SK-N-SH (cell line): ENCODE measurements at regions of chr2 and their contacts with region 1.

Region 1: GRCh38 chr2:165239230-165239629 is at the start of gene SCN2A:
- DNase-seq: peak; percentile 33
- H3K4me3 ChIP-seq: peak within 1 kb of the TSS in 1 of 2 experiments; percentile 33; a peak in 3 of 4 replicates
- H3K27ac ChIP-seq: peak within 1 kb of the TSS in 1 of 2 experiments; percentile 68; a peak in 2 of 4 replicates
- H3K4me1 ChIP-seq: no peaks in the 10 kb centered on the region; a peak in 1 of 4 replicates
- H3K27me3 ChIP-seq: no peaks in the 10 kb centered on the region
- CTCF ChIP-seq: peak; percentile 85
- EP300 ChIP-seq: no peak
- RAD21 ChIP-seq: peak; percentile 91
- polyA plus RNA-seq, gene SCN2A: 5.1 and 7.3 TPM in 2 replicates

Region 2: GRCh38 chr2:165219481-165219880 is 19.7 kb before region 1 on chr2:
- CTCF ChIA-PET with region 1: interaction called, 17 read pairs
- POLR2A ChIA-PET with region 1: no interaction called
- DNase-seq: no peak
- H3K4me3 ChIP-seq: no peak overlapping the region
- H3K27ac ChIP-seq: no peak overlapping the region
- H3K4me1 ChIP-seq: no peaks in the 10 kb centered on the region; a peak in 1 of 4 replicates
- H3K27me3 ChIP-seq: no peaks in the 10 kb centered on the region
- CTCF ChIP-seq: no peak
- EP300 ChIP-seq: no peak
- RAD21 ChIP-seq: no peak

Region 3: GRCh38 chr2:165227571-165227970 is 11.7 kb before region 1 on chr2:
- CTCF ChIA-PET with region 1: interaction called, 26 read pairs
- POLR2A ChIA-PET with region 1: no interaction called
- DNase-seq: no peak
- H3K4me3 ChIP-seq: no peak overlapping the region
- H3K27ac ChIP-seq: no peak overlapping the region
- H3K4me1 ChIP-seq: no peaks in the 10 kb centered on the region
- H3K27me3 ChIP-seq: no peaks in the 10 kb centered on the region
- CTCF ChIP-seq: no peak
- EP300 ChIP-seq: no peak
- RAD21 ChIP-seq: no peak

Region 4: GRCh38 chr2:165283342-165283741 is 44.1 kb after region 1 on chr2:
- CTCF ChIA-PET with region 1: interaction called, 13 read pairs
- POLR2A ChIA-PET with region 1: no interaction called
- DNase-seq: no peak
- H3K4me3 ChIP-seq: no peak overlapping the region
- H3K27ac ChIP-seq: no peak overlapping the region
- H3K4me1 ChIP-seq: peaks cover 0 to 3% of the 10 kb centered on the region in 2 experiments; a peak in 2 of 4 replicates
- H3K27me3 ChIP-seq: no peaks in the 10 kb centered on the region
- CTCF ChIP-seq: no peak
- EP300 ChIP-seq: no peak
- RAD21 ChIP-seq: no peak

Region 5: DNA sequence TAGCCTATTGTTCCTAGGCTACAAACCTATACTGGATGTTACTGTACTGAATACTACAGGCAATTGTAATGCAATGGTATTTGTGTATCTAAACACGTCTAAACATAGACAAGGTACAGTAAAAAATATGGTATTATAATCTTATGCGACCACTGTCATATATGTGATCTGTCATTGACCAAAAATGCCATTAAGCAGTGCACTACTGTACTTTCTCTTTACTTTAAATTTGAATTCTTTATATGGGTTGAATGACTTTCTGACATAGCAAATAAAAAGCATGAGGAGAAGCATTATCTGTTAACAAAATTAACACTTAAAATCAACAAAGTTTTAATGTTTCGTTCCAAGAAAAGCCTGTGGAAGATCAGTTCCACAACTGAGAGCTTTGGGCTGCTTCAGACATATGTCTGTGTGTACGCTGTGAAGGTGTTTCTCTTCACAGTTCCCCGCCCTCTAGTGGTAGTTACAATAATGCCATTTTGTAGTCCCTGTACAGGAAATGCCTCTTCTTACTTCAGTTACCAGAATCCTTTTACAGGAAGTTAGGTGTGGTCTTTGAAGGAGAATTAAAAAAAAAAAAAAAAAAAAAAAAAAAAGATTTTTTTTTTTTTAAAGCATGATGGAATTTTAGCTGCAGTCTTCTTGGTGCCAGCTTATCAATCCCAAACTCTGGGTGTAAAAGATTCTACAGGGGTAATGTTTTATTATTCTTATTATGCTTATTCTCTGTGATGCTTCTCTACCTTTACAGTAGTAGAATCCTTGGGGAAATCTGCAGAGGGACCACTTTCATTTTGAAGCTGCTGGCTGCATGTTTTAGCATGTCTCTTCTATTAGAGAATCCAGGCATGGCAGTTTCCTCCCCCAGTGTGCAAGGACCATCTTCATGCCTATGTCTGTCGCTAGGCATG is 54.5 kb after region 1 on chr2:
- CTCF ChIA-PET with region 1: interaction called, 23 read pairs
- POLR2A ChIA-PET with region 1: interaction called, 7 read pairs
- DNase-seq: peak; percentile 67
- H3K4me3 ChIP-seq: peak overlapping the region; percentile 86 to 90
- H3K27ac ChIP-seq: peak overlapping the region in 1 of 2 experiments; percentile 90; a peak in 2 of 4 replicates
- H3K4me1 ChIP-seq: peaks cover 0 to 11% of the 10 kb centered on the region in 2 experiments; a peak in 2 of 4 replicates
- H3K27me3 ChIP-seq: no peaks in the 10 kb centered on the region
- CTCF ChIP-seq: peak; percentile 76
- EP300 ChIP-seq: no peak
- RAD21 ChIP-seq: peak; percentile 70

Region 6: GRCh38 chr2:165305391-165306096 is 66.3 kb after region 1 on chr2:
- CTCF ChIA-PET with region 1: interaction called, 16 read pairs
- POLR2A ChIA-PET with region 1: interaction called, 3 read pairs
- DNase-seq: no peak
- H3K4me3 ChIP-seq: no peak overlapping the region
- H3K27ac ChIP-seq: no peak overlapping the region
- H3K4me1 ChIP-seq: no peaks in the 10 kb centered on the region
- H3K27me3 ChIP-seq: no peaks in the 10 kb centered on the region
- CTCF ChIP-seq: no peak
- EP300 ChIP-seq: no peak
- RAD21 ChIP-seq: no peak

Region 7: GRCh38 chr2:165499131-165499530 is 259.9 kb after region 1 on chr2:
- CTCF ChIA-PET with region 1: no interaction called
- POLR2A ChIA-PET with region 1: no interaction called
- DNase-seq: no peak
- H3K4me3 ChIP-seq: no peak overlapping the region
- H3K27ac ChIP-seq: peak overlapping the region in 1 of 2 experiments; percentile 22; a peak in 1 of 4 replicates
- H3K4me1 ChIP-seq: no peaks in the 10 kb centered on the region; a peak in 1 of 4 replicates
- H3K27me3 ChIP-seq: no peaks in the 10 kb centered on the region
- CTCF ChIP-seq: no peak
- EP300 ChIP-seq: no peak
- RAD21 ChIP-seq: no peak

Region 8: DNA sequence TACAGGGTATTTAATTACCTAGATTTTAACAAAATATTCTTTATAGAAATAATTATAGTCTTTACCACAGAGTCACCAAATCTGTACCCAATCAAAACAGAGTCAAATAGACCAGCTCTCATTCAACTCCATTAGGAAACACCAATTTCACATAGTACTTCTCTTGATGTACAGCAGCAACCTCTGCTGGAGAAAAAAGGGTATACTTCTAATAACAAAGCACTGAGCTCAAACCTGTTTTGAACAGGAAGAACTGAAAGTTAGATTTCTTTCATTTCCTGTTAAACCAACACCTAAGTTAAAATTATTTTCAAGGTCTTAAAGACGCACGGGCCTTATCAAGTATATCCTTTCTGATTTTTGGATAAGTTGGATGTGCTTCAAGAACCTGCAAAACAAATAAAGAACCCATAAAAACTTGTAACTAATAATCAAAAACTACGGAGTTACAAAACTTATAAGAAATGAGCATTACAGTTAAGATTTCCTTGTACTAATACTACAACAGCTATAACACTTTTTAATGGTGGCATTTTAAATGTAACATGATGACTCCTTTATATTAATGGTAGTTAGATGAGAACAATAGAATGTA is 635.3 kb after region 1 on chr2:
- CTCF ChIA-PET with region 1: interaction called, 26 read pairs
- POLR2A ChIA-PET with region 1: no interaction called
- DNase-seq: peak; percentile 44
- H3K4me3 ChIP-seq: no peak overlapping the region; a peak in 1 of 4 replicates
- H3K27ac ChIP-seq: no peak overlapping the region; a peak in 1 of 4 replicates
- H3K4me1 ChIP-seq: no peaks in the 10 kb centered on the region
- H3K27me3 ChIP-seq: no peaks in the 10 kb centered on the region
- CTCF ChIP-seq: peak; percentile 79
- EP300 ChIP-seq: no peak
- RAD21 ChIP-seq: peak; percentile 96